ENCODE measurements at regions of chr4 and their contacts with region 1.

Region 1: GRCh38 chr4:2536193-2537010 is at the start of gene FAM193A:
- DNase-seq: peak; percentile 99
- ATAC-seq: peak; percentile 78 to 80
- H3K4me3 ChIP-seq: peak within 1 kb of the TSS; percentile 73 to 99 (median 89)
- H3K27ac ChIP-seq: peak within 1 kb of the TSS; percentile 88 to 97 (median 96)
- H3K4me1 ChIP-seq: peaks cover 25 to 34% of the 10 kb centered on the region in 2 donors
- H3K27me3 ChIP-seq: no peaks in the 10 kb centered on the region
- CTCF ChIP-seq: no peak
- POLR2A ChIP-seq: peak; percentile 48 to 75
- total RNA-seq, gene FAM193A: 16.7 to 18.9 (median 18.0) TPM

Region 2: GRCh38 chr4:2071912-2072867 is 464.2 kb before region 1 on chr4:
- in situ Hi-C with region 1: no loop called
- intact Hi-C with region 1: no loop called
- DNase-seq: no peak
- ATAC-seq: no peak
- H3K4me3 ChIP-seq: no peak overlapping the region
- H3K27ac ChIP-seq: no peak overlapping the region
- H3K4me1 ChIP-seq: no peaks in the 10 kb centered on the region
- H3K27me3 ChIP-seq: peaks cover 0 to under 1% (median 0%) of the 10 kb centered on the region in 3 donors
- CTCF ChIP-seq: no peak
- POLR2A ChIP-seq: no peak

Region 3: GRCh38 chr4:2262143-2262943 is 274.1 kb before region 1 on chr4:
- in situ Hi-C with region 1: no loop called
- intact Hi-C with region 1: loop called (anchors 1 kb)
- DNase-seq: peak; percentile 99 to 100
- ATAC-seq: peak; percentile 81 to 82
- H3K4me3 ChIP-seq: peak overlapping the region; percentile 56 to 91 (median 76)
- H3K27ac ChIP-seq: peak overlapping the region; percentile 93 to 99 (median 96)
- H3K4me1 ChIP-seq: peaks cover 55 to 77% of the 10 kb centered on the region in 2 donors
- H3K27me3 ChIP-seq: no peaks in the 10 kb centered on the region
- CTCF ChIP-seq: no peak
- POLR2A ChIP-seq: peak; percentile 91 to 98

Region 4: GRCh38 chr4:2418650-2419571 is 117.5 kb before region 1 on chr4 and contains the start of gene CFAP99:
- in situ Hi-C with region 1: no loop called
- intact Hi-C with region 1: loop called (anchors 5 kb)
- DNase-seq: peak; percentile 97 to 98
- ATAC-seq: peak; percentile 90 to 91
- H3K4me3 ChIP-seq: peak within 1 kb of the TSS; percentile 69 to 94 (median 77)
- H3K27ac ChIP-seq: peak within 1 kb of the TSS; percentile 47 to 79 (median 64)
- H3K4me1 ChIP-seq: peaks cover 16 to 26% of the 10 kb centered on the region in 2 donors
- H3K27me3 ChIP-seq: peaks cover 0 to 23% (median 15%) of the 10 kb centered on the region in 3 donors
- CTCF ChIP-seq: peak in 3 of 5 experiments; percentile 4 to 11 (median 5)
- POLR2A ChIP-seq: no peak
- total RNA-seq, gene CFAP99: not detected

Region 5: GRCh38 chr4:2468445-2469192 is 67.8 kb before region 1 on chr4 and contains the start of gene RNF4:
- in situ Hi-C with region 1: no loop called
- intact Hi-C with region 1: loop called (anchors 1 kb)
- DNase-seq: peak; percentile 94 to 97
- ATAC-seq: peak; percentile 98
- H3K4me3 ChIP-seq: peak within 1 kb of the TSS; percentile 81 to 89 (median 88)
- H3K27ac ChIP-seq: peak within 1 kb of the TSS; percentile 88 to 98 (median 94)
- H3K4me1 ChIP-seq: peaks cover 26 to 27% of the 10 kb centered on the region in 2 donors
- H3K27me3 ChIP-seq: no peaks in the 10 kb centered on the region
- CTCF ChIP-seq: no peak
- POLR2A ChIP-seq: peak; percentile 75 to 81
- total RNA-seq, gene RNF4: 21.7 to 48.7 (median 34.7) TPM

Region 6: GRCh38 chr4:2591189-2591588 is 54.8 kb after region 1 on chr4:
- in situ Hi-C with region 1: no loop called
- intact Hi-C with region 1: loop called (anchors 2 kb)
- DNase-seq: no peak
- ATAC-seq: no peak
- H3K4me3 ChIP-seq: no peak overlapping the region
- H3K27ac ChIP-seq: peak overlapping the region; percentile 6 to 72 (median 36)
- H3K4me1 ChIP-seq: peaks cover 77 to 90% of the 10 kb centered on the region in 2 donors
- H3K27me3 ChIP-seq: no peaks in the 10 kb centered on the region
- CTCF ChIP-seq: no peak
- POLR2A ChIP-seq: no peak

Region 7: DNA sequence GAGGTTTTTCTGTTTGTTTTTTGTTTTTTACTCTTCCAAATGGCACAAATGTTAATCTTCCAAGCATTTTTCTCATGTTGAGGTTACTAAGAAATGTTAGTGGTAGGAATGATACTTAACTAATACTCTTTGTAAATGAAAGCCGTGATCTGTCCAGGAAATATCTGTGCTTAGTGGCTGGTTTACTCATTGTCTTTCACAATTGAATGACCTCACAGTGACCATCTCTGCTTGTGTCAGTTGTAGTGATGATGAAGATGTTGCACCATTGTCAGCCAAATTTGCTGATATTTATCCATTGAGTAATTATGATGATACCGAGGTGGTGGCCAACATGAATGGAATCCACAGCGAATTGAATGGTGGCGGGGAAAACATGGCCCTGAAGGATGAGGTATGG is 126.2 kb after region 1 on chr4:
- in situ Hi-C with region 1: no loop called
- intact Hi-C with region 1: loop called (anchors 2 kb)
- DNase-seq: no peak
- ATAC-seq: no peak
- H3K4me3 ChIP-seq: no peak overlapping the region
- H3K27ac ChIP-seq: peak overlapping the region; percentile 65 to 81 (median 77)
- H3K4me1 ChIP-seq: peaks cover 19 to 25% of the 10 kb centered on the region in 2 donors
- H3K27me3 ChIP-seq: no peaks in the 10 kb centered on the region
- CTCF ChIP-seq: no peak
- POLR2A ChIP-seq: no peak

Region 8: GRCh38 chr4:2862528-2862927 is 326.1 kb after region 1 on chr4:
- in situ Hi-C with region 1: no loop called
- intact Hi-C with region 1: loop called (anchors 10 kb)
- DNase-seq: peak in 1 of 2 donors; percentile 3
- ATAC-seq: peak; percentile 36 to 59
- H3K4me3 ChIP-seq: peak overlapping the region; percentile 3 to 36 (median 23)
- H3K27ac ChIP-seq: peak overlapping the region; percentile 70 to 84 (median 79)
- H3K4me1 ChIP-seq: peaks cover 99 to 100% of the 10 kb centered on the region in 2 donors
- H3K27me3 ChIP-seq: no peaks in the 10 kb centered on the region
- CTCF ChIP-seq: no peak
- POLR2A ChIP-seq: no peak

Measured in gastrocnemius medialis (tissue), 4 donors.